Right ventricle myocardium superior (tissue), 1 donor: ENCODE measurements at regions of chr6 and their contacts with region 1.

Region 1: GRCh38 chr6:96897383-96898240 is at the start of gene NDUFAF4:
- DNase-seq: peak; percentile 98
- ATAC-seq: peak; percentile 99
- total RNA-seq, gene NDUFAF4: 101 TPM

Region 2: DNA sequence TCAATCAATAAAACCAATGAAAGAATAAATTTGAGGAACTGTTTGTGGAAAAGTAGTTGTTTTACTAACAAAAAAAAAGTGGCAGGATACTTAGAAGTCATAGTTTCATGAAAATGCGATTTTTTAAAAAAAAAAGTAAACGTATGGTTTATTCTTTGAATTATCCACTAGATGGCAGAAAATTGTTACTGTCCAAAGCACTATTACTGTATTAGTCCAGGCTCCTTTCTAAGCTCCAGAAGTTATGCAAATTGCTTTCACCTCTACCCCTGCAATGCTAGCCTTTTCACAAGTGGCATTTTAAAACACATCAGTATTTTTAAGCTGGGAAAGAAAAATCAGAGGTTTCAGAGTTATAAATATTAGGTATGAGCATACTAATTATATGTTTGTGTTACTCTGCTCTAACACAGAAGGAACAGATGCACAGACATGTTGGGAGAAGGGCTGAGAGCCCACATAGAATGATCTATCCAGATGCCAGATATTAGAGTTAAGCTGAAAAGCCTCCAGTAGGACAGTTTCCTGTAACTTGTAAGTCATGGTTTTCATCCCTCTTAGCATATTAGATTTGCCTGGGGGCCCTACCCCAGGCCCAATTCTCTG is 270.8 kb before region 1 on chr6:
- intact Hi-C with region 1: loop called (anchors 5 kb)
- DNase-seq: no peak
- ATAC-seq: peak; percentile 66

Region 3: GRCh38 chr6:96755096-96755495 is 142.5 kb before region 1 on chr6:
- intact Hi-C with region 1: no loop called
- DNase-seq: no peak
- ATAC-seq: no peak

Region 4: GRCh38 chr6:96837081-96837971 is 60.3 kb before region 1 on chr6 and contains the start of gene GPR63:
- intact Hi-C with region 1: loop called (anchors 5 kb)
- DNase-seq: peak; percentile 71
- ATAC-seq: peak; percentile 93
- total RNA-seq, gene GPR63: 0.40 TPM

Region 5: DNA sequence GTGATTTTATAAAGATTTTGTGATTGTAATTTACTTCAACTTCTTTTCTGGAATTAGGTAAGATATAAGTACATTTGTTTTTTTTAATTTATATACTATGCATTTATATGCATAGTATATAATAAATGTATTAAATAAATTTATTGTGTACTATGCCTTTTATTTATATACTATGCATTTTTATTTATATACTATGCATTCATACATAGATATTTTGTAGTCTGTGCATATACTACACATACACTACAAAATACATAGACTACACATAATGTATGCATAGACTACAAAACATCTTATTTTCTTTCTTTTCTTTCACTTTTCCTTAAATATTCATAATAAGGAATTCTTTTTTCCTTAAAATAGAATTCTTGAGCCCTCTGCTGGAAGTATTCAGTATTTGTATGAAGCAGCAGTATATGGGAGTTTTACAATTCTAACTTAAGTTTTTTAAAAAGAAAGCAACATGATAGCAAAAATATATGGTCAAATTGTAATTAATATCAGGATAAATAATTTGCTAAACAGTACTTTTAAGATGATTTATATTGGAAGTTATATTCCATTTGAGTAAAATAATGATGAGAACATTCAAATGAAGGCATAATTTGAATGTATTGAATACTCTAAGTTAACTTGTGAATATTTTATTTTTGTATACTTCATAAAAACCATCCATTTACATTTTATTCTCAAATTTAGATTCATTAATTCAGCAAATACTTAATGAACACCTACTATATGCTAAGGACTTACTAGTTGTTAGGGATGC is 156.2 kb after region 1 on chr6:
- intact Hi-C with region 1: loop called (anchors 5 kb)
- DNase-seq: no peak
- ATAC-seq: no peak